Natural killer cell (primary cell): ENCODE measurements at regions of chr6 and their contacts with region 1.

Region 1: DNA sequence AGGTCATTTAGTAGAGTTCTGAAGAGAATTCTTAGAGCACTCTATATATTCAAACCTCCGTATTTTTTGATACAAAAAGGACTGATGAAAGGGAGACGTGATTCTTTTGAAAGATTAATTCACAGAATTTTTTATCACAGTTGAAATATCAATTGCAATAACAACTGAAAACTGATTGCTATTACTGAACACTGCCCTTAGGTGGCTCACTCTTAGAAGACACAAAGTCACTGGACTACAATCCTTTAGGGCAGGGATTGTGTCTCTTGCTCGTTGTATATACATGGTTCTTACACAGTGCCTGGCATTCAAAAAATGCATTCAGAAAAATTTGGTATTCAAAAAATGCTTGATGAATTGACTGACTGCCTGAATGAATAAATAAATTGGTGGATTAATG is 17.1 kb upstream of the CALHM6 start:
- DNase-seq: peak in 1 of 2 donors; percentile 52
- ATAC-seq: peak; percentile 67 to 75 (median 67)
- H3K4me3 ChIP-seq: no peak overlapping the region
- H3K4me3 Mint-ChIP-seq: peak overlapping the region; percentile 52
- H3K27ac ChIP-seq: no peak overlapping the region
- H3K27ac Mint-ChIP-seq: no peak overlapping the region
- H3K4me1 ChIP-seq: peaks cover 16% of the 10 kb centered on the region
- H3K4me1 Mint-ChIP-seq: peaks cover 19 to 24% of the 10 kb centered on the region in 2 donors
- H3K27me3 ChIP-seq: no peaks in the 10 kb centered on the region
- H3K27me3 Mint-ChIP-seq: peaks cover 8 to 20% of the 10 kb centered on the region in 2 donors
- CTCF ChIP-seq: peak; percentile 41

Region 2: GRCh38 chr6:116531675-116532570 is 87.8 kb after region 1 on chr6:
- intact Hi-C with region 1: loop called (anchors 1 kb)
- DNase-seq: peak; percentile 30 to 82
- ATAC-seq: peak; percentile 95 to 97 (median 97)
- H3K4me3 ChIP-seq: no peak overlapping the region
- H3K4me3 Mint-ChIP-seq: no peak overlapping the region
- H3K27ac ChIP-seq: no peak overlapping the region
- H3K27ac Mint-ChIP-seq: no peak overlapping the region
- H3K4me1 ChIP-seq: no peaks in the 10 kb centered on the region
- H3K4me1 Mint-ChIP-seq: no peaks in the 10 kb centered on the region
- H3K27me3 ChIP-seq: no peaks in the 10 kb centered on the region
- H3K27me3 Mint-ChIP-seq: peaks cover 21 to 42% of the 10 kb centered on the region in 2 donors
- CTCF ChIP-seq: peak; percentile 95